Dorsolateral prefrontal cortex (tissue), 120 donors: ENCODE measurements at regions of chr19 and their contacts with region 1.

Region 1: GRCh38 chr19:29505097-29505824 is 20.5 kb upstream of the VSTM2B start:
- DNase-seq: peak; percentile 33 to 94 (median 91)
- H3K4me3 ChIP-seq: no peak overlapping the region
- H3K27ac ChIP-seq: peak overlapping the region; percentile 66 to 100 (median 97)
- H3K27me3 ChIP-seq: peaks cover 0 to under 1% (median 0%) of the 10 kb centered on the region in 45 donors
- CTCF ChIP-seq: peak in 6 of 56 donors; percentile 13 to 27 (median 21)

Region 2: GRCh38 chr19:29520390-29520789 is 15.1 kb after region 1 on chr19:
- intact Hi-C with region 1: loop called in 1 of 2 experiments (anchors 2 kb)
- DNase-seq: peak in 5 of 10 donors; percentile 29 to 55 (median 43)
- H3K4me3 ChIP-seq: no peak overlapping the region
- H3K27ac ChIP-seq: peak overlapping the region in 44 of 59 donors; percentile 13 to 80 (median 57)
- H3K27me3 ChIP-seq: peaks cover 0 to 19% (median 0%) of the 10 kb centered on the region in 45 donors
- CTCF ChIP-seq: peak in 2 of 56 donors; percentile 13 to 17

Region 3: GRCh38 chr19:29665215-29665825 is 160.1 kb after region 1 on chr19 and contains the start of gene PLEKHF1:
- intact Hi-C with region 1: no loop called
- DNase-seq: peak; percentile 79 to 98 (median 90)
- H3K4me3 ChIP-seq: peak within 1 kb of the TSS; percentile 63 to 98 (median 89)
- H3K27ac ChIP-seq: peak within 1 kb of the TSS in 58 of 59 donors; percentile 19 to 90 (median 81)
- H3K27me3 ChIP-seq: no peaks in the 10 kb centered on the region
- CTCF ChIP-seq: peak in 11 of 56 donors; percentile 13 to 80 (median 43)
- total RNA-seq, gene PLEKHF1: 3.7 to 27.9 (median 8.5) TPM